SK-N-SH (cell line): ENCODE measurements at regions of chr15 and their contacts with region 1.

Region 1: GRCh38 chr15:81265944-81266775 is 57.8 kb downstream of the STARD5 start:
- DNase-seq: peak; percentile 82
- H3K4me3 ChIP-seq: peak overlapping the region; percentile 9 to 51; a peak in 2 of 4 replicates
- H3K27ac ChIP-seq: no peak overlapping the region
- H3K4me1 ChIP-seq: peaks cover 5 to 11% of the 10 kb centered on the region in 2 experiments; a peak in 2 of 4 replicates
- H3K27me3 ChIP-seq: peaks cover 10% of the 10 kb centered on the region; the same call in 1 of the 2 replicates
- CTCF ChIP-seq: peak; percentile 84
- EP300 ChIP-seq: no peak
- RAD21 ChIP-seq: peak; percentile 95

Region 2: DNA sequence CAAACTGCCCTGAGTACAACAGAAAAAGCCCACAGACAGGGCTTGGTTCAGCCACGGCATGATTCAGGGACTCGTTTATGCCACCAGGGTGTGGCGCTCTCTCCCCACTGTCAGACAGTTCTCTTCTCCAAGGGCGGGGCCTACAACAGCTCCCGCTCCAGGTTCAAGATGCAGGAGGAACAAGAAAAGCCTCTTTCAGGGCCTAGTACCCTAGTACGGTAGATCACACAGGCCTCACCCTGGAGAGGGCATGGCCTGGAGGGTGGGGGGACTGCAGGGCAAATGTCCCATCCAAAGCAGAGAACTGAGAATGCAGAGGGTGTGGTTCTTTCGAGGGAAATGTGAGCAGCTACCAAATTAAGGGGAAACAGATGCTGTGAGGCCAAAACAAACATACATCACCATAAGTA is 288.5 kb before region 1 on chr15:
- CTCF ChIA-PET with region 1: interaction called, 31 read pairs
- POLR2A ChIA-PET with region 1: no interaction called
- DNase-seq: peak; percentile 48
- H3K4me3 ChIP-seq: no peak overlapping the region; a peak in 1 of 4 replicates
- H3K27ac ChIP-seq: no peak overlapping the region
- H3K4me1 ChIP-seq: no peaks in the 10 kb centered on the region; a peak in 2 of 4 replicates
- H3K27me3 ChIP-seq: no peaks in the 10 kb centered on the region
- CTCF ChIP-seq: peak; percentile 52
- EP300 ChIP-seq: no peak
- RAD21 ChIP-seq: peak; percentile 54

Region 3: DNA sequence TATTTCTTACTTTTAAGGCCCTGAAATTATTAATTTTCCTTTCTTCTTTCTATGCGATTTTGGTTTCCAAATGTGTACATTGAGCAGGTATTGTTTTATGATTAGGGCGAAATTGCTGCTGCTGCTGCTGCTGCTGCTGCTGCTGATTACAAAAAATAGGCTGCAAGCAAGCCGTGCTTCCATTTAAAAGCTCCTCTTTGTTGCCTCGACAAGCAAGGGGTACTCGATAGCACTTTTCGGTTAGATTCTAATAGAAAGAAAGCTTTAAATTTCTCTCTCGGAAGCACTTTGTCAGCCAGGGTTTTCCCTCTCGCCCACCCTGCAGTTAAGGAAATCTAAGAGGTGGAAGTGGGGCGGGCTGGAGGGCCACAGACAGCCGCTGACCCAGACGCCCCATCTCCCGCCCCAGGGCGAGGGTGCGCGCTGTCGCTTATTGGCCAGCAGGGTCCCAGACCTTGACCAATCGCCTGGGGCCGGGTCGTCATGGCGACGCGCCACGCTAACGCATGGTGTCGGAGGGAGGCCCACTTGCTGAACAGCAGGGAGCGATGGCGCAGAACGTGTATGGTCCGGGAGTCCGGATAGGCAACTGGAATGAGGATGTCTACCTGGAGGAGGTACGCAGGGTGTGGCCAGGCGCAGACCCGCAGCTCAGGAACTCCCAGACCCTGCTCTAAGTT is 132.2 kb before region 1 on chr15 and contains the start of gene CFAP161:
- CTCF ChIA-PET with region 1: interaction called, 49 read pairs
- POLR2A ChIA-PET with region 1: no interaction called
- DNase-seq: peak; percentile 93
- H3K4me3 ChIP-seq: peak within 1 kb of the TSS; percentile 46 to 62
- H3K27ac ChIP-seq: peak within 1 kb of the TSS in 1 of 2 experiments; percentile 75; a peak in 2 of 4 replicates
- H3K4me1 ChIP-seq: peaks cover 0 to 5% of the 10 kb centered on the region in 2 experiments; a peak in 1 of 4 replicates
- H3K27me3 ChIP-seq: no peaks in the 10 kb centered on the region; the same call in 1 of the 2 replicates
- CTCF ChIP-seq: no peak
- EP300 ChIP-seq: peak in 1 of 2 experiments; percentile 23; a peak in 1 of 4 replicates
- RAD21 ChIP-seq: no peak
- polyA plus RNA-seq, gene CFAP161: 0.03 TPM in 1 of 2 replicates, not detected in the other

Region 4: DNA sequence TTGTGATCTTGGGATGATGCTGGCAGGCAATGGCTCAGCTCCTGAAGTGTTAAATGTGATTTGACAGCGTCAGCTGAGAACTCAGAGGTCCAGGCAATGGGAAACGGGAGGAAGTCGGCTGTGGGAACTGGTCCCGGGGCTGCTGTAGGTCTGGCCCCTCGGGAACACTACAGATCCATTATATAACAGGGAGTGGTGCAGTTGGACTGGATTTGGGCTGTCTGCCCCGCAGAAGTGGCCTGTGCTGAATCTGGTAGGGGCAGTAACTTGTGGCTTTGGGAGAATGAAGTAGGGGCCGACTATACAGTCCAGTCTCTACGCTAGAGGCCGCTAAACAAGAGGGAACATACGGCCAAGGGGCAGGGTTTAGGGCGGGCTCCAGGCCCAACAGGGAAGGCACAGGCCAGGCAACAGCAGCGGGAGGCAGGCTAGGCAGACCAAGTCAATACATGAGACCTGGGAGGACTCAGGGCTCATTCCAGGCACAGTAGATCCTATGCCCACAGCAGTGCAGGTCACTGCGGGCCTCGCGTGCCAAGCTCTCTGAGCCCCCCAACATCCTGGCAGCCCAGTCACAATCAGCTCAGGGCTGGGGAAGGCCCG is 89.8 kb before region 1 on chr15:
- CTCF ChIA-PET with region 1: interaction called, 18 read pairs
- POLR2A ChIA-PET with region 1: no interaction called
- DNase-seq: no peak
- H3K4me3 ChIP-seq: no peak overlapping the region
- H3K27ac ChIP-seq: no peak overlapping the region
- H3K4me1 ChIP-seq: no peaks in the 10 kb centered on the region
- H3K27me3 ChIP-seq: no peaks in the 10 kb centered on the region
- CTCF ChIP-seq: no peak
- EP300 ChIP-seq: no peak
- RAD21 ChIP-seq: no peak

Region 5: DNA sequence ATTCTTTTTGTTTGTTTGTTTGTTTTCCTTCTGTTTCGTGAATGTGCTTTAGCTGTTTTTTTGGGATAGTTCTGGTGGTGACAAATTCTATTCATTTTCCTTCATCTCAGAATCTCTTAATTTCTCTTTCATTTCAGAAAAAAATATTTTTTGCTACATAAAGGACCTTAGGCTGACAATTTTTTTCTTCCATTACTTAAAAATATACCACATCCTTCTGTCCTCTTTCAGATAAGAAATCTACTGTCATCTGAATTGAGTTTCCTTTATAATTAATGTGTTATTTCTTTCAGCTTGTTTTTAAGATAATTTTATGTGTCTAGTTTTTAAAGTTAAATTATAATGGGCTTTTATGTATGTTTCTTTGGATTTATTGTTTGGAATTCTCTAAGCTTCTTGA is 21.9 kb before region 1 on chr15:
- CTCF ChIA-PET with region 1: interaction called, 25 read pairs
- POLR2A ChIA-PET with region 1: no interaction called
- DNase-seq: no peak
- H3K4me3 ChIP-seq: no peak overlapping the region
- H3K27ac ChIP-seq: no peak overlapping the region
- H3K4me1 ChIP-seq: no peaks in the 10 kb centered on the region
- H3K27me3 ChIP-seq: no peaks in the 10 kb centered on the region
- CTCF ChIP-seq: no peak
- EP300 ChIP-seq: no peak
- RAD21 ChIP-seq: no peak

Region 6: GRCh38 chr15:81373775-81374395 is 107.7 kb after region 1 on chr15 and contains the start of gene TMC3:
- CTCF ChIA-PET with region 1: interaction called, 10 read pairs
- POLR2A ChIA-PET with region 1: no interaction called
- DNase-seq: no peak
- H3K4me3 ChIP-seq: no peak within 1 kb of the TSS
- H3K27ac ChIP-seq: no peak within 1 kb of the TSS
- H3K4me1 ChIP-seq: peaks cover 0 to 2% of the 10 kb centered on the region in 2 experiments; a peak in 1 of 4 replicates
- H3K27me3 ChIP-seq: no peaks in the 10 kb centered on the region
- CTCF ChIP-seq: no peak
- EP300 ChIP-seq: no peak
- RAD21 ChIP-seq: no peak
- polyA plus RNA-seq, gene TMC3: not detected in 2 replicates

Region 7: DNA sequence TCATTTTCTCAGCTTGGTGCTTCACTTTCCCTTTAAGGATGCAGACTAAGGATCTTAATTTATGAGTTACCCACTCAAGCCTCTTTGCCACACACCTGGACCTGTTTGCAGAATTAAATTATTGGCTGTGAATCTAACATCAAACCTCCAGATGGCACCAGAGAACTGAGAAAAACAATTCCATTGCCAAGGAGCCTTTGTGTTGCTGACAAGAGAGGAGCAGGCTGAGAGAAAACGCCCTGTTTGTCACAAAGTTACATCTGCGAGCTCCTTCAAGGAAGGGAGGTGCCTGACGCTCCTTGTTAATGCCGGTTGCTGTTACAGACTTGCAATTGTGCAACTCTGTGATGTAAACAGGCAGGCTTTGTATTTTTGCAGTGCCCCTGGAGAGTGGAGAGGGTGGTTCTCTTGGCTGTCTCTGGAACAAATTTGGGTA is 144.2 kb after region 1 on chr15:
- CTCF ChIA-PET with region 1: interaction called, 93 read pairs
- POLR2A ChIA-PET with region 1: no interaction called
- DNase-seq: peak; percentile 57
- H3K4me3 ChIP-seq: no peak overlapping the region; a peak in 1 of 4 replicates
- H3K27ac ChIP-seq: no peak overlapping the region
- H3K4me1 ChIP-seq: peaks cover 0 to 17% of the 10 kb centered on the region in 2 experiments; a peak in 2 of 4 replicates
- H3K27me3 ChIP-seq: no peaks in the 10 kb centered on the region
- CTCF ChIP-seq: peak; percentile 70
- EP300 ChIP-seq: no peak
- RAD21 ChIP-seq: peak; percentile 91